HCT116 (cell line): ENCODE measurements at regions of chr11 and their contacts with region 1.

Region 1: DNA sequence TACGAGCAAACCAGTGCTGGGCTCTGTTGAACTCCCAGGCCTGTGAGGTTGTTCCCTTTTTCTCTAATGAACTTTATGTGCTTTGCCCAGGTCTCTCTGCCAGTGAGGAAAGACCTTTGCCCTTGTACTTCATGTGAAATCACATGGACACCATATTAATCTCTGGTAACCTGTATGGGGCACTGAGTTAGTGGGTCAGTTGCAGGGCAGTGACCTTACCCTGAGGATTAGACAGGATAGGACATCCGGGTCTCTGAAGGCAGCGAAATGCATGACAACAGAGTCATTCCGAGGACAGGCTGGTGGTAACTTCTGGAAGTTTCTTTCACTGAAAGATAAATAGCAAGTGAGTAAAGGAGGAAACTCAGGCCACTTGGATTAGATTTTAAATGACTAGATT is 93.7 kb downstream of the ZBTB16 start:
- DNase-seq: no peak
- ATAC-seq: no peak
- H3K4me3 ChIP-seq: no peak overlapping the region
- H3K27ac ChIP-seq: no peak overlapping the region
- H3K4me1 ChIP-seq: no peaks in the 10 kb centered on the region
- H3K27me3 ChIP-seq: peaks cover 70% of the 10 kb centered on the region
- CTCF ChIP-seq: no peak
- POLR2A ChIP-seq: no peak
- RAD21 ChIP-seq: no peak

Region 2: DNA sequence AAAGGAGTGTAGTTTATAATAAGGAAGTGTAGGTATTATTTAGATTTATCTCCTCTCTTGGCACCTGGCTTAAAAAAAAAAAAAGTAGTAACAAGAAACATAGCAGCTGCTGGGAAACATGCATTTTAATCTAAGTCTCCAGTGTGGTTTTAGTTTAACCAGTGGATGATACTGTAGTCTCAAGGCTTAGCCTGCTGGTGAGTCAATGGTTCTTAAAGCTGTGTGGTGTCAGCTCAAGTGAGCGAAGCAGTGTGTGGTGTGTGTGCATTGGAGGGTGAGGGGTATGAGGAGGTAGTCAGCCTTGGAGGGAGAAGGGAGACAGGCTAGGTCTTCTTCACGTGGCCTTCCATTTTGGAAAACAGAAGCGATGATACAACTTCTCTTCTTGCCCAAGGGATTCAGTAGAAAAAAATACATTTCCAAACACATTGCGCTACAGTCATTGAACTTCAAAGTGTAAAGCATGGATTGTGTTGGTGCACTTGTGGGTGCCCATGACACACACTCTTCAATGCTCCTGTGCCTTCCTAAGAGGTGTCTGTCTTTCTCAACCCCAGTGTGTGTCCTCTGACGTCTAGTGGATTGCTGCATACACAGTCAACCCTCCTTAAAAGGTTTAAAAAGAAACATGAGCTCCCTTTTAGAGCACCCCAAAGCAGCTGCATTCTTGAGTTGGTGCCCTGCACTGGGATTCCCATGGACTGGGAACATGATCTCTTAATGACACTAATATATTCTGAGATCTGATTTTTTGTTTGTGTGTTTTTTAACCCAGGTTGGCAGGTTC is 53.6 kb before region 1 on chr11:
- CTCF ChIA-PET with region 1: no interaction called
- POLR2A ChIA-PET with region 1: no interaction called
- RAD21 ChIA-PET with region 1: no interaction called
- intact Hi-C with region 1: no loop called
- DNase-seq: no peak
- ATAC-seq: no peak
- H3K4me3 ChIP-seq: no peak overlapping the region
- H3K27ac ChIP-seq: no peak overlapping the region
- H3K4me1 ChIP-seq: no peaks in the 10 kb centered on the region
- H3K27me3 ChIP-seq: peaks cover 63% of the 10 kb centered on the region
- CTCF ChIP-seq: no peak
- POLR2A ChIP-seq: no peak
- RAD21 ChIP-seq: no peak

Region 3: GRCh38 chr11:114134870-114135269 is 18.4 kb before region 1 on chr11:
- CTCF ChIA-PET with region 1: no interaction called
- POLR2A ChIA-PET with region 1: no interaction called
- RAD21 ChIA-PET with region 1: no interaction called
- intact Hi-C with region 1: loop called (anchors 1 kb)
- DNase-seq: no peak
- ATAC-seq: no peak
- H3K4me3 ChIP-seq: no peak overlapping the region
- H3K27ac ChIP-seq: no peak overlapping the region
- H3K4me1 ChIP-seq: no peaks in the 10 kb centered on the region
- H3K27me3 ChIP-seq: peaks cover 63% of the 10 kb centered on the region
- CTCF ChIP-seq: no peak
- POLR2A ChIP-seq: no peak
- RAD21 ChIP-seq: no peak

Region 4: DNA sequence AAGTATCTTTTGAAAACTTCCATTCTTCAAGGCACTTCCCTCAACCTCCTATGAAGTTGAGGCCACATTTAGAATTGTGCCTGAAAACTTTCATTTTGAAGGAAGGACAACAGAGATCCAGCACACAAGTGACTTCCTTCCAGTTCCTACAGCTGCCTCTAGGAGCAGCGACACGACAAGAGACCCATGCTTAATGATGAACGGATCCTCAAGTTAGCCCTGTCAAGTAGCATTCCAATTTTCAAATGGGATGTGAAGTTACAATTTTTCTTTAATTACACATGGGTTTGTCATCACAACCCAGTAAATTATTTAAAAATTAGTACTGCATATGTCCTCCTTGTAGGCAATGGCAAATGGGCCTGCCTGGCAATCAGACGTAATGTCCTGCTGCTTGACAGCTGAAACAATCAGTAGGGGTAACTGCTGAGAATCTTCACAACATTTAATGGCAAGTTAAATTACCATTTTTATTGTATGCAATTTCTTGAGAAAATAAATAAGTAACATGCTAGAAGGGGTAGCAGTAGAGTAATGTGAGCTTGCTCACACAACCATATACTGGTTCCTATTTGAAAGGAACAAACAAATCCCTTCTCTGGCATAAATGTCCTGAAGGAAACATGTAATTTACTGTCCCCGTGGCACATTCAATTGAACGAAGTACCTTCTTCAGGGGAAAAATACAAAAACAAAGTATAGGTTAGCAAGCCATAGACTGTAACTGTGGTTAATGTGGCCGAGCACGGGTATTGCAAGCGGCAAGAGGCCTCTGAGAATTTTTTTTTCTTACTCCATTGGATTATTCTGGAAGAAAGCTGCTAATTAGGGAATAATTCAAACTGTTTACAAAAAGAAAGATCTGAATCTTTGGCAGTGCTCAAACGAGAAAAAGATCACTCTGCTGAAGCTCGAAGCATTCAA is 1062.7 kb after region 1 on chr11:
- CTCF ChIA-PET with region 1: no interaction called
- POLR2A ChIA-PET with region 1: no interaction called
- RAD21 ChIA-PET with region 1: no interaction called
- intact Hi-C with region 1: no loop called
- DNase-seq: no peak
- ATAC-seq: no peak
- H3K4me3 ChIP-seq: no peak overlapping the region
- H3K27ac ChIP-seq: no peak overlapping the region
- H3K4me1 ChIP-seq: no peaks in the 10 kb centered on the region
- H3K27me3 ChIP-seq: no peaks in the 10 kb centered on the region
- CTCF ChIP-seq: peak in 2 of 3 experiments; percentile 12 to 32; a peak in 2 of 6 replicates
- POLR2A ChIP-seq: no peak
- RAD21 ChIP-seq: no peak